Heart left ventricle (tissue), 16 donors: ENCODE measurements at regions of chr19 and their contacts with region 1.

Region 1: GRCh38 chr19:45506246-45506990 is 861 bp upstream of the VASP start:
- DNase-seq: peak; percentile 95 to 98 (median 97)
- ATAC-seq: peak; percentile 71 to 86 (median 82)
- H3K4me3 ChIP-seq: peak overlapping the region; percentile 78 to 100 (median 96)
- H3K27ac ChIP-seq: peak overlapping the region; percentile 84 to 99 (median 96)
- H3K4me1 ChIP-seq: peaks cover 0 to 50% (median 19%) of the 10 kb centered on the region in 12 donors
- H3K27me3 ChIP-seq: no peaks in the 10 kb centered on the region
- CTCF ChIP-seq: peak in 11 of 12 donors; percentile 17 to 75 (median 50)
- POLR2A ChIP-seq: peak; percentile 65 to 78

Region 2: DNA sequence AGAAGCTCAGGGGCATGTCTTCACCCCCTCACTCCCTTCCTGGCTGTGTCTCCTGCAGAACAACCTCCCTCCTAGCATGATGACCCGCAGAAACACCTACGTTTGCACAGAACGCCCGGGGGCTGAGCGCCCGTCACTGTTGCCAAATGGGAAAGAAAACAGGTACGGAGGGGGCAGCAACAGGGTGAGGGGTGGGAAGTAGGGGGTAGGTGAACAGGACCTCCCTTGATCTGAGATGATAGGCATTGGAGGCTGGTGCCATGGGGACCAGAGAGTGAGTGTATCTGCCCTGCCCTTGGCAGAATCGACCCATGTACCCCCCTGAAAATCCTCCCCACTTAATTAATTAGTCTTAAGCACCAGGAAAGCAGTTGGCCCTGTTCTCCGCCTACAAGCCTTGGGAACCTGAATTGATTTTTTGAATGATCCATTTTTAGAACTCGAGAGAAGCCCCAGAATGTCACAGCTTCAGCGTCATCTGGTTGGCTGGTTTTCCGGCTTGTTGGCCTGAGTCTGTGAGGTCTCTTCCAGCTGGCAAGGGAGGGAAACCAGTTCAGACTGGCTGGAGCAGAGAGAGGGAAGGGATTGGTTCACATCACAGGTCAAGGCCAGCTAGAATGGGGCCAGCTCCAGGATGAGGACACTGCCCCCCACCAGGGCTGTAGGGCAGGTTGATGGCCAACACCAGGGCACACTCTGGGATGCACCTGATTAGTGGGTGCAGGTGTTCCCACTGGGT is 212.0 kb before region 1 on chr19:
- intact Hi-C with region 1: no loop called
- DNase-seq: peak in 4 of 5 donors; percentile 67 to 78 (median 73)
- ATAC-seq: peak; percentile 89 to 96 (median 90)
- H3K4me3 ChIP-seq: no peak overlapping the region
- H3K27ac ChIP-seq: peak overlapping the region in 7 of 12 donors; percentile 39 to 75 (median 57)
- H3K4me1 ChIP-seq: peaks cover 0 to 12% (median 1%) of the 10 kb centered on the region in 12 donors
- H3K27me3 ChIP-seq: no peaks in the 10 kb centered on the region
- CTCF ChIP-seq: no peak
- POLR2A ChIP-seq: no peak

Region 3: GRCh38 chr19:45584332-45585157 is 78.1 kb after region 1 on chr19 and contains the start of gene OPA3:
- intact Hi-C with region 1: loop called in 2 of 10 experiments (anchors 5 kb)
- DNase-seq: peak; percentile 100
- ATAC-seq: peak; percentile 95 to 97 (median 96)
- H3K4me3 ChIP-seq: peak within 1 kb of the TSS; percentile 52 to 85 (median 66)
- H3K27ac ChIP-seq: peak within 1 kb of the TSS; percentile 92 to 100 (median 96)
- H3K4me1 ChIP-seq: peaks cover 0 to 20% (median 13%) of the 10 kb centered on the region in 12 donors
- H3K27me3 ChIP-seq: no peaks in the 10 kb centered on the region
- CTCF ChIP-seq: peak in 3 of 12 donors; percentile 26 to 35 (median 34)
- POLR2A ChIP-seq: peak in 1 of 2 donors; percentile 71
- total RNA-seq, gene OPA3: 21.3 to 30.4 (median 22.5) TPM